ENCODE measurements at regions of chr21 and their contacts with region 1.

Region 1: GRCh38 chr21:39183237-39184007 is at the start of gene PSMG1:
- DNase-seq: peak; percentile 86 to 97 (median 93)
- ATAC-seq: peak; percentile 92
- H3K4me3 ChIP-seq: peak within 1 kb of the TSS; percentile 88 to 89
- H3K4me3 Mint-ChIP-seq: peak within 1 kb of the TSS; percentile 97
- H3K27ac ChIP-seq: peak within 1 kb of the TSS; percentile 73 to 91
- H3K27ac Mint-ChIP-seq: peak within 1 kb of the TSS; percentile 94
- H3K4me1 ChIP-seq: peaks cover 27% of the 10 kb centered on the region
- H3K4me1 Mint-ChIP-seq: peaks cover 42% of the 10 kb centered on the region
- H3K27me3 ChIP-seq: no peaks in the 10 kb centered on the region
- H3K27me3 Mint-ChIP-seq: no peaks in the 10 kb centered on the region
- CTCF ChIP-seq: no peak
- total RNA-seq, gene PSMG1: 4.7 to 6.8 TPM

Region 2: DNA sequence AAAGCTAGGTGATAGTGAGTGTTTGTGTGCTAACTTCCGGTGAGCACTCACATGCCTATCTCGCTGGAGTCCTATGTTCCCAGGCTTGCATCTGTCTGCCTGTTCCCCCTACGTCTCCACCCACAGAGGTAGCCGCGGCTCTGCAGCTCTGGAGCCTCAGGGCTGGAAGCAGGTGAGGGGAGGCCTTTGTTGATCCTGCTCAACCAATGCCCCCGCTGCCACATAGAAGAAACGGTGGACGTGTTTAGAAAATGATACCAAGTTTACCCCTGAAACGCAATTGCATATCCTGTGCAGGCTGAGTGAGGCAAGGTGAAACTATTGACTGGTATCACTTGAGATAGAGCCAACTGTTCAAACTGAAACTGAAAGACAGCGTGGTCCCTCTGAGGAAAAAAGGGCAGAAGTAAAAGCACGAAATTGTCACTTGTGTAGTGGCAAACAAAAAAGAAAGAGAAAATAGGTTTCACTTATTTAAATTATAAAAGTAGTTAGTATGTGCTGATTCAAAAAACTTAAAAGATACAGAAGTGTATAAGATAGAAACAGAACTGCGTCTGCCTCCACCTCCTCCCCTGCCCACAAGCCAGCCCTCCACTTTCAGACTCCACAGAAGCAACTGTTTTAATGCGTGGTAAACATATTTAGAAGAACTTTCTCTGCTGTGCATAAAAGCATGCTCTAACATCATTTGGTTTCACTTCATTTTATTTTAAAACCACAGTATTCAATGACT is 416.3 kb before region 1 on chr21:
- CTCF ChIA-PET with region 1: no interaction called
- POLR2A ChIA-PET with region 1: no interaction called
- intact Hi-C with region 1: loop called in 1 of 2 experiments (anchors 1 kb)
- DNase-seq: peak; percentile 13 to 88 (median 46)
- ATAC-seq: peak; percentile 85
- H3K4me3 ChIP-seq: peak overlapping the region; percentile 54 to 55
- H3K4me3 Mint-ChIP-seq: peak overlapping the region; percentile 82
- H3K27ac ChIP-seq: peak overlapping the region; percentile 69 to 82
- H3K27ac Mint-ChIP-seq: peak overlapping the region; percentile 96
- H3K4me1 ChIP-seq: peaks cover 21% of the 10 kb centered on the region
- H3K4me1 Mint-ChIP-seq: peaks cover 32% of the 10 kb centered on the region
- H3K27me3 ChIP-seq: no peaks in the 10 kb centered on the region
- H3K27me3 Mint-ChIP-seq: no peaks in the 10 kb centered on the region
- CTCF ChIP-seq: no peak

Region 3: DNA sequence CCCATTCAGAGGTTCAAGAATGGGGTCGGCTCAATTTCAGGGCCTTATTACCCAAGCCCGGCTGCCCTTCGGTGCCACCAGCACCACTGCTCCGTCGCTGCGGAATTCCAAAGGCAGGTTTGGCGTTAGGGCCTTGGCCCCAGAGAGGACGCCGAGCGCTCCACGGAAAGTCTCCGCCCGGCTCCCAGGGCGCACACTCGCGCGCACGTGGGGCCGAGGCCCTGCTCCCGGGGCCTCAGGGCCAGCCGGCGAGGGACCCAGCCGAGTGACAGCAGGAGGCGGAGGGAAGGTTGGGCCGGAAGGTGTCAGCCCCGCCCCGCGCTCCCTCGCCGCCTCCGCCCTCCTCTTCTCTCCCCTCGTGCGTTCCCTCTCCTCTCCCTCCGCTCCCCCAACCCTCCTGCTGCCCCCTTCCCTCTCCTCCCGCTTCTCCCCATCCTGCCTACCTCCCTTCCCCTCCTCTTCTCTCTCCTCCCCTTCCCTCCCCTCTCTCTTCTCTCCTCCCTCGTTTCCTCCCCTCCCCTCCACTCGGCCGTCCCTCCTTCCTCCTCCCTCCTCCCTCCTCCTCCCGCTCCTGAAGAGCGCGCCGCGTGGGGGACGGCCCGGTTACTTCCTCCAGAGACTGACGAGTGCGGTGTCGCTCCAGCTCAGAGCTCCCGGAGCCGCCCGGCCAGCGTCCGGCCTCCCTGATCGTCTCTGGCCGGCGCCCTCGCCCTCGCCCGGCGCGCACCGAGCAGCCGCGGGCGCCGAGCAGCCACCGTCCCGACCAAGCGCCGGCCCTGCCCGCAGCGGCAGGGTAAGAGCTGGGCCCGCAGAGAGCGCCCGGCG is 377.9 kb before region 1 on chr21 and contains the start of gene ETS2:
- CTCF ChIA-PET with region 1: no interaction called
- POLR2A ChIA-PET with region 1: interaction called, 3 read pairs
- intact Hi-C with region 1: loop called (anchors 1 to 2 kb)
- DNase-seq: peak; percentile 33 to 84 (median 63)
- ATAC-seq: peak; percentile 83
- H3K4me3 ChIP-seq: peak within 1 kb of the TSS; percentile 74 to 79
- H3K4me3 Mint-ChIP-seq: peak within 1 kb of the TSS; percentile 84
- H3K27ac ChIP-seq: peak within 1 kb of the TSS; percentile 51 to 59
- H3K27ac Mint-ChIP-seq: peak within 1 kb of the TSS; percentile 73
- H3K4me1 ChIP-seq: peaks cover 8% of the 10 kb centered on the region
- H3K4me1 Mint-ChIP-seq: peaks cover 31% of the 10 kb centered on the region
- H3K27me3 ChIP-seq: no peaks in the 10 kb centered on the region
- H3K27me3 Mint-ChIP-seq: peaks cover 2% of the 10 kb centered on the region
- CTCF ChIP-seq: no peak
- total RNA-seq, gene ETS2: 8.1 to 10.0 TPM

Region 4: GRCh38 chr21:39349211-39350093 is 166.0 kb after region 1 on chr21:
- CTCF ChIA-PET with region 1: no interaction called
- POLR2A ChIA-PET with region 1: interaction called, 7 read pairs
- intact Hi-C with region 1: loop called (anchors 1 to 2 kb)
- DNase-seq: peak; percentile 91 to 98 (median 97)
- ATAC-seq: peak; percentile 83
- H3K4me3 ChIP-seq: peak overlapping the region; percentile 74 to 75
- H3K4me3 Mint-ChIP-seq: peak overlapping the region; percentile 96
- H3K27ac ChIP-seq: peak overlapping the region; percentile 89 to 95
- H3K27ac Mint-ChIP-seq: peak overlapping the region; percentile 99
- H3K4me1 ChIP-seq: peaks cover 42% of the 10 kb centered on the region
- H3K4me1 Mint-ChIP-seq: peaks cover 38% of the 10 kb centered on the region
- H3K27me3 ChIP-seq: no peaks in the 10 kb centered on the region
- H3K27me3 Mint-ChIP-seq: no peaks in the 10 kb centered on the region
- CTCF ChIP-seq: no peak

Region 5: GRCh38 chr21:39379986-39380891 is 196.8 kb after region 1 on chr21:
- CTCF ChIA-PET with region 1: no interaction called
- POLR2A ChIA-PET with region 1: no interaction called
- intact Hi-C with region 1: loop called in 1 of 2 experiments (anchors 2 kb)
- DNase-seq: peak; percentile 75 to 95 (median 89)
- ATAC-seq: peak; percentile 97
- H3K4me3 ChIP-seq: peak overlapping the region; percentile 70 to 91
- H3K4me3 Mint-ChIP-seq: peak overlapping the region; percentile 93
- H3K27ac ChIP-seq: peak overlapping the region; percentile 80 to 92
- H3K27ac Mint-ChIP-seq: peak overlapping the region; percentile 93
- H3K4me1 ChIP-seq: peaks cover 12% of the 10 kb centered on the region
- H3K4me1 Mint-ChIP-seq: peaks cover 26% of the 10 kb centered on the region
- H3K27me3 ChIP-seq: peaks cover 0 to 2% of the 10 kb centered on the region in 2 experiments
- H3K27me3 Mint-ChIP-seq: peaks cover 4% of the 10 kb centered on the region
- CTCF ChIP-seq: no peak

Measured in CD8-positive, alpha-beta T cell (primary cell).